ENCODE measurements at regions of chr1 and their contacts with region 1.

Region 1: GRCh38 chr1:246450611-246451251 is 56.3 kb downstream of the SMYD3 start:
- DNase-seq: peak; percentile 53
- H3K4me3 ChIP-seq: no peak overlapping the region
- H3K27ac ChIP-seq: no peak overlapping the region
- H3K4me1 ChIP-seq: no peaks in the 10 kb centered on the region
- H3K27me3 ChIP-seq: no peaks in the 10 kb centered on the region
- CTCF ChIP-seq: peak; percentile 34 to 42
- POLR2A ChIP-seq: no peak

Region 2: GRCh38 chr1:246002725-246003441 is 447.8 kb before region 1 on chr1:
- CTCF ChIA-PET with region 1: interaction called, 4 read pairs
- POLR2A ChIA-PET with region 1: no interaction called
- dilution Hi-C with region 1: no loop called
- intact Hi-C with region 1: loop called (anchors 2 kb)
- DNase-seq: peak; percentile 83
- H3K4me3 ChIP-seq: no peak overlapping the region
- H3K27ac ChIP-seq: no peak overlapping the region
- H3K4me1 ChIP-seq: no peaks in the 10 kb centered on the region
- H3K27me3 ChIP-seq: no peaks in the 10 kb centered on the region
- CTCF ChIP-seq: peak; percentile 70 to 77
- POLR2A ChIP-seq: no peak

Region 3: DNA sequence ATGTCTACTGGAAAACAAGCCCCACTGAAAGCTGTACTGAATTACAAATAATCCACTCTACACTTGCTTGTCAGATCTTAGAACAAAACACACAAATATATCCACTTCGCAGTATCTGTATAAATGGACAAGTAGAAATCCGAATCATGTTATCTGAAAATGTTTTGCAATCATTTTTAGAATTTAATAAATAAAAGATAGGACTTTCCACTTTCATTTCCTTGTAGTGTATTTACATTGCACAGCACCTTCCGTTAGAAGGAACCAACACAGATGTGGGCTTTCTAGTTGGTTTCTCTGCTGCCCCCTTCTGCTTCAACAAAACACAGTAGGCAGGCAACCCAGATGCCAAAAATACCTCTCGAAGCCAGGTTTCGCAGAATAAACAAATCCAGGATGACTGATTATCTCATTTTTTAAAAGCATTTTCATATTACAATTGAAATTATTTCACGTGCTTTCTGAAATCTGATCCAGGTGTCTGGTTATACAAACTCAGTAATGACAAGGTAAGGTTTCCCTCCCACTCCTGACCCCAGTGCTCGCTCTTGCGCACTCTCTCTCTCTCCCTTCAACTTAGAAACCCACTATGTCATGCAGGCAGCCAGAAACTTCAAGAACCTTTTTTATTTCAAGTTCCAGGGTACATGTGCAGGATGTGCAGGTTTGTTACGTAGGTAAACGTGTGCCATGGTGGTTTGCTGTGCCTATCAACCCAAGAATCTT is 333.5 kb before region 1 on chr1:
- CTCF ChIA-PET with region 1: no interaction called
- POLR2A ChIA-PET with region 1: no interaction called
- dilution Hi-C with region 1: no loop called
- intact Hi-C with region 1: loop called (anchors 5 kb)
- DNase-seq: peak; percentile 70
- H3K4me3 ChIP-seq: no peak overlapping the region
- H3K27ac ChIP-seq: no peak overlapping the region
- H3K4me1 ChIP-seq: peaks cover 7% of the 10 kb centered on the region
- H3K27me3 ChIP-seq: no peaks in the 10 kb centered on the region
- CTCF ChIP-seq: peak; percentile 17 to 46
- POLR2A ChIP-seq: no peak

Region 4: GRCh38 chr1:246280551-246280950 is 170.2 kb before region 1 on chr1:
- CTCF ChIA-PET with region 1: interaction called, 4 read pairs
- POLR2A ChIA-PET with region 1: no interaction called
- dilution Hi-C with region 1: no loop called
- intact Hi-C with region 1: loop called (anchors 2 kb)
- DNase-seq: peak; percentile 36
- H3K4me3 ChIP-seq: no peak overlapping the region
- H3K27ac ChIP-seq: no peak overlapping the region
- H3K4me1 ChIP-seq: no peaks in the 10 kb centered on the region
- H3K27me3 ChIP-seq: no peaks in the 10 kb centered on the region
- CTCF ChIP-seq: no peak
- POLR2A ChIP-seq: no peak

Region 5: GRCh38 chr1:246295968-246296367 is 154.8 kb before region 1 on chr1:
- CTCF ChIA-PET with region 1: no interaction called
- POLR2A ChIA-PET with region 1: no interaction called
- dilution Hi-C with region 1: no loop called
- intact Hi-C with region 1: loop called (anchors 5 kb)
- DNase-seq: peak; percentile 53
- H3K4me3 ChIP-seq: no peak overlapping the region
- H3K27ac ChIP-seq: peak overlapping the region; percentile 78
- H3K4me1 ChIP-seq: peaks cover 43% of the 10 kb centered on the region
- H3K27me3 ChIP-seq: no peaks in the 10 kb centered on the region
- CTCF ChIP-seq: no peak
- POLR2A ChIP-seq: no peak